ENCODE measurements at regions of chr12 and their contacts with region 1.

Region 1: GRCh38 chr12:103965590-103966504 is at the start of gene TDG:
- DNase-seq: peak; percentile 98
- H3K4me3 Mint-ChIP-seq: peak within 1 kb of the TSS; percentile 92
- H3K27ac Mint-ChIP-seq: peak within 1 kb of the TSS; percentile 97
- H3K4me1 Mint-ChIP-seq: peaks cover 28% of the 10 kb centered on the region
- H3K27me3 Mint-ChIP-seq: no peaks in the 10 kb centered on the region
- CTCF ChIP-seq: peak; percentile 28
- total RNA-seq, gene TDG: 31.6 and 31.8 TPM in 2 replicates

Region 2: DNA sequence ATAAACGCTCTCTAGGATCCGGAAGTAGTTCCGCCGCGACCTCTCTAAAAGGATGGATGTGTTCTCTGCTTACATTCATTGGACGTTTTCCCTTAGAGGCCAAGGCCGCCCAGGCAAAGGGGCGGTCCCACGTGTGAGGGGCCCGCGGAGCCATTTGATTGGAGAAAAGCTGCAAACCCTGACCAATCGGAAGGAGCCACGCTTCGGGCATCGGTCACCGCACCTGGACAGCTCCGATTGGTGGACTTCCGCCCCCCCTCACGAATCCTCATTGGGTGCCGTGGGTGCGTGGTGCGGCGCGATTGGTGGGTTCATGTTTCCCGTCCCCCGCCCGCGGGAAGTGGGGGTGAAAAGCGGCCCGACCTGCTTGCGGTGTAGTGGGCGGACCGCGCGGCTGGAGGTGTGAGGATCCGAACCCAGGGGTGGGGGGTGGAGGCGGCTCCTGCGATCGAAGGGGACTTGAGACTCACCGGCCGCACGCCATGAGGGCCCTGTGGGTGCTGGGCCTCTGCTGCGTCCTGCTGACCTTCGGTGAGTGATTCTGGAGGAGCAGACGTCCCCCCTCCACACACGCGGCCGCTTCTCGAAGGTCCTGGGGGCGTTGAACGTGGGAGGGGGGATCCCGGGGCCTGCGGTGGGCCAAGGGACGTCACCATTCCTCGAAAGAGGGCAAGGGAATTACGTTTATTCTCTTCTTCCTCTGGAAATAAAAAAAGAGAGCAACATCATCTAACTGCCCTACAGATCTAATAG is 35.6 kb before region 1 on chr12 and contains the start of gene HSP90B1:
- CTCF ChIA-PET with region 1: interaction called, 7 read pairs
- POLR2A ChIA-PET with region 1: interaction called, 97 read pairs
- intact Hi-C with region 1: no loop called
- DNase-seq: peak; percentile 100
- H3K4me3 Mint-ChIP-seq: peak within 1 kb of the TSS; percentile 75
- H3K27ac Mint-ChIP-seq: peak within 1 kb of the TSS; percentile 58
- H3K4me1 Mint-ChIP-seq: peaks cover 23% of the 10 kb centered on the region
- H3K27me3 Mint-ChIP-seq: no peaks in the 10 kb centered on the region
- CTCF ChIP-seq: no peak
- total RNA-seq, gene HSP90B1: 1,052 and 1,334 TPM in 2 replicates

Region 3: DNA sequence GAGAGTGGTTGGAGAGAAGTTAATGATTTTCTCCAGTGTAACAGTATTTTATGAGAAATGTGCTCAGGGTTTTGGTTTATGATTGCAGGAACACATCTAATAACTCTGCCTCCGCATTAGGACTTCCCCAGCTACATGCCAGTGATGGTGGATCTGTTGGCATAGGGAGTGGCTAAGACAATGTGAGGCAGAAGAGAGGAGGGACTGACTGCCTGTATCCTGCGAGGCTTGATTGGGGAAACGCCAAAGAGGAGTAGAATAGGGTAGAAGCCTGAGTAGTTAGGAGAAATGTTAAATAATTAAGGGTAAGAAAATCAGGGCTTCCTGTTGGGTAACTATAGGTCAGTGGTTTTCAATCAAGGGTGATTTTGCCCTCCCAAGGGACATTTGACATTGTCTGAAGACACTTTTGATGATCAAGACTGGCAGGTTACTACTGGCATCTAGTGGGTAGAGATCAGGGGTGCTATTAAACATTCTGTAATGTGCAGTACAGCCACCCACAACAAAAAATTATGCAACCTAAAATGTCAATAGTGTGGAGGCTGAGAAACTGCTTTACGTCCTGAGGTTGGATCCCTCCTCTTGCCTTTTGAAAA is 12.6 kb after region 1 on chr12:
- CTCF ChIA-PET with region 1: interaction called, 5 read pairs
- POLR2A ChIA-PET with region 1: interaction called, 20 read pairs
- intact Hi-C with region 1: no loop called
- DNase-seq: no peak
- H3K4me3 Mint-ChIP-seq: no peak overlapping the region
- H3K27ac Mint-ChIP-seq: no peak overlapping the region
- H3K4me1 Mint-ChIP-seq: peaks cover 5% of the 10 kb centered on the region
- H3K27me3 Mint-ChIP-seq: no peaks in the 10 kb centered on the region
- CTCF ChIP-seq: no peak

Region 4: GRCh38 chr12:104011261-104011660 is 45.4 kb after region 1 on chr12:
- CTCF ChIA-PET with region 1: no interaction called
- POLR2A ChIA-PET with region 1: interaction called, 10 read pairs
- intact Hi-C with region 1: no loop called
- DNase-seq: peak; percentile 95
- H3K4me3 Mint-ChIP-seq: peak overlapping the region; percentile 9
- H3K27ac Mint-ChIP-seq: peak overlapping the region; percentile 85
- H3K4me1 Mint-ChIP-seq: peaks cover 25% of the 10 kb centered on the region
- H3K27me3 Mint-ChIP-seq: no peaks in the 10 kb centered on the region
- CTCF ChIP-seq: no peak

Region 5: DNA sequence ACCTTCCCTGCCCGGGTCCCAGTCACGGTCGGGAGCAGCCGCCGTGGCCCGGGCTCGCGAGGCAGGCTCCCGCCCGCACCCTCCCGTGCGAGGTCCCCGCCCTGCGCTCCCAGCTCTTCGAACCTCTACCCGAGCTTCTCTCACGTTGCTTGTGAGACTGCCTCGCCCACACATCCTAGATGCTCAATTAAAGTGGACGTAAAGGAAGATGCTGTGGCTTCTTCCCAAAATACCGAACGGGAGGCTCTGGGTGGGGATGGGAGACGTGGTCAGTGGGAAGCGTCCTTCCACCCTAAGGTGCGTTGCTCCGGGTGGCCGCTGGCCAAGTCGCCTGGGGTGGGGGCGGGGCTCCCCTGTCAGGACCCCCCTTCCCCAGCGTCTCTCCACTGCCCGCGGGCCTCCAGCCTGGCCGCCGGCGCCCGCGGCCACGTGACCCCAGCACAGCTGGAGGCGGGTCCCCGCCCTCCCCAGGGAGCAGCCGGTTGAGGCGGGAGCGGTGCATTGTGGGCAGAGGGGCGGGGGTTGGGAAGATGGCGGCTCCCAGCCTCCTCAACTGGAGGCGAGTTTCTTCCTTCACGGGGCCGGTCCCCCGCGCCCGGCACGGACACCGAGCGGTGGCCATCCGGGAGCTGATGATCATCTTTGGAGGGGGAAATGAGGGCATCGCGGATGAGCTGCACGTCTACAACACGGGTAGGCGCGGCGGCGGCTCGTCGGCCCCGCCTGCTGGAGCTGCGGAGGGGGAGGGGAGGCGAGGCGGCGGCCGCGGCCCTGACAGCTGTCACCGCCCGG is 98.4 kb after region 1 on chr12 and contains the start of gene HCFC2:
- CTCF ChIA-PET with region 1: interaction called, 8 read pairs
- POLR2A ChIA-PET with region 1: interaction called, 60 read pairs
- intact Hi-C with region 1: loop called (anchors 2 kb)
- DNase-seq: peak; percentile 82
- H3K4me3 Mint-ChIP-seq: peak within 1 kb of the TSS; percentile 91
- H3K27ac Mint-ChIP-seq: peak within 1 kb of the TSS; percentile 75
- H3K4me1 Mint-ChIP-seq: peaks cover 15% of the 10 kb centered on the region
- H3K27me3 Mint-ChIP-seq: no peaks in the 10 kb centered on the region
- CTCF ChIP-seq: no peak
- total RNA-seq, gene HCFC2: 10.3 and 11.4 TPM in 2 replicates

Measured in MCF 10A (cell line).